ENCODE measurements at regions of chr6 and their contacts with region 1.

Region 1: DNA sequence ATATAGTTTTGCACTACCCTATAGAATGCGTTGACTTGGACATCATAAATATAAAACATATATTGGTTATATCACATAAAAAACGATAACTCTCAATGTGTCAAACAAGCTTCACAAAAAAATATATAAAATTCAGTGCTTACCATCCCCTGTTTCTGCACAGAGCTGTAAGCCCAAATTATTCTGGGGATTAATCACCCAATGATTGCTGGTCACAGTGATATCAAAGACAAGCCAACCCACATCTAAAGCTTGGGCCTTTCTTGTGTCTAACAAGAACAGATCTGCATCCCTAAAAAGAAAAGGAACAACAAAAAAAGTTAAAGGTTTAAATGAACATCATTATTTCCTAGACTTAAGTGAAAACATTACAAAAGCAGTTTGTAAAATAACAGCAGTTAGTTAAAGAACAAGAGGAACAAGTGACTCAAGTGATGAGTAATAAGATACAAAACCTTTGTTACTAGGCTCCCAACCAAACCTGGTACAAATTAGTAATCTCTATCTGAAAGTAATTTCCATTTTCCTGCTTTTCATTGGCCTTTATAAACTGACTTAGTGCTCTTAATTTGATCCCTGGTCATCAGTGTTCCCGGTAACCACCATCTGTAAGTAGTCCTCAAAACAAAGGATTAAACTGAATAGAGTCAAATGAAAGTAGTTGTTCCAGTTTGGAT is 81.1 kb downstream of the BMP5 start:
- DNase-seq: peak; percentile 78
- ATAC-seq: peak; percentile 72
- H3K4me3 ChIP-seq: no peak overlapping the region
- H3K27ac ChIP-seq: peak overlapping the region; percentile 65
- H3K4me1 ChIP-seq: peaks cover 27% of the 10 kb centered on the region
- H3K27me3 ChIP-seq: no peaks in the 10 kb centered on the region
- CTCF ChIP-seq: no peak

Region 2: GRCh38 chr6:55758156-55758888 is 36.0 kb before region 1 on chr6:
- CTCF ChIA-PET with region 1: no interaction called
- POLR2A ChIA-PET with region 1: no interaction called
- intact Hi-C with region 1: loop called (anchors 1 kb)
- DNase-seq: peak; percentile 97
- ATAC-seq: peak; percentile 99
- H3K4me3 ChIP-seq: no peak overlapping the region
- H3K27ac ChIP-seq: peak overlapping the region; percentile 85
- H3K4me1 ChIP-seq: peaks cover 37% of the 10 kb centered on the region
- H3K27me3 ChIP-seq: no peaks in the 10 kb centered on the region
- CTCF ChIP-seq: no peak

Region 3: DNA sequence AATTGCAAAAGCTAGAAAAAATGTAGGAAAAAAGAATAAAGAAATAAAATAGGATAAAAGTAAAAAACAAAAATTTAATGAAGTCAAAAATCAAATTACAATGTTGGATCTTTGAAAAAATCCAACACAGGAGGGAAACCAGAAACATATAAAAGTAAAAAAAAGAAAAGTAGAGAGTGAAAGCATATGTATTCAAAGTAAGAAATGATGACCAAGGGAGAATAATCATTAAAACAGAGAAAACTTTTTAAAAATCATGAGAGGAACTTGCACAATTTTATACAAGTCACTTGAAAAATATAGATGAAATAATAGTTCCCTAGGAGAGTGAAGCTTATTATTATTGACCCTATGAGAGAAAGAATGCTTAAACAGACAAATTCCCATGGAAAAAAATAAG is 314.9 kb after region 1 on chr6:
- CTCF ChIA-PET with region 1: no interaction called
- POLR2A ChIA-PET with region 1: no interaction called
- intact Hi-C with region 1: no loop called
- DNase-seq: no peak
- ATAC-seq: no peak
- H3K4me3 ChIP-seq: no peak overlapping the region
- H3K27ac ChIP-seq: no peak overlapping the region
- H3K4me1 ChIP-seq: no peaks in the 10 kb centered on the region
- H3K27me3 ChIP-seq: no peaks in the 10 kb centered on the region
- CTCF ChIP-seq: no peak